ENCODE measurements at regions of chr10 and their contacts with region 1.

Region 1: DNA sequence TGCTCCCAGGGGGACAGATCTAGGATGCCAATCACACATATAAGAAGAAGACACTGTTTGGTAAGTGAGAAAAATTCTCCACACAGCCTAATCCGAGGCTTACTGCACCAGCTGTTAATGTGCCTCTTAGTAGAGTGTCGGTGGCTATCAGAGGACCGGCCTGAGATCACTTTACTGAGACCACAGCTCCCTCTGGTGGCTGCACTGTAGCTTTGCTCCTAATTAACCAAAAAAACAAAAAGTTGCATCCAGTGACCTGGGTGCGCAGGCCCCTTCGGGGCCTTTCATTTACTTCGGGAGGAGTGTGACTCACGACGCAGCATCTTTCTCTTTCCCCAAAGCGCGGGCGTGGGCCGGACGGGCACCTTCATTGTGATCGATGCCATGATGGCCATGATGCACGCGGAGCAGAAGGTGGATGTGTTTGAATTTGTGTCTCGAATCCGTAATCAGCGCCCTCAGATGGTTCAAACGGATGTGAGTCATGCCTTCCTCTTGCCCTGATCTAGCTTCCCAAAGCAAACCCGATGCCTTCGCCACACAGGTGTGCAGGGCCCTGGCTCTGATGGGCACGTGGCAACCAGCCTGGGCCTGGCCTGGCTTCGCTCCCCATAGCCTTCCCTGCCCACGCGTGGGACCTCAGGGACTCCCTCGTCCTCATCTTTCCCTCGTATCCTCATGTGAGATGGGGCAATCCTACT is 56.7 kb downstream of the MKI67 start:
- DNase-seq: peak; percentile 82
- H3K4me3 Mint-ChIP-seq: no peak overlapping the region
- H3K27ac Mint-ChIP-seq: no peak overlapping the region
- H3K4me1 Mint-ChIP-seq: peaks cover 46% of the 10 kb centered on the region
- H3K27me3 Mint-ChIP-seq: no peaks in the 10 kb centered on the region

Region 2: DNA sequence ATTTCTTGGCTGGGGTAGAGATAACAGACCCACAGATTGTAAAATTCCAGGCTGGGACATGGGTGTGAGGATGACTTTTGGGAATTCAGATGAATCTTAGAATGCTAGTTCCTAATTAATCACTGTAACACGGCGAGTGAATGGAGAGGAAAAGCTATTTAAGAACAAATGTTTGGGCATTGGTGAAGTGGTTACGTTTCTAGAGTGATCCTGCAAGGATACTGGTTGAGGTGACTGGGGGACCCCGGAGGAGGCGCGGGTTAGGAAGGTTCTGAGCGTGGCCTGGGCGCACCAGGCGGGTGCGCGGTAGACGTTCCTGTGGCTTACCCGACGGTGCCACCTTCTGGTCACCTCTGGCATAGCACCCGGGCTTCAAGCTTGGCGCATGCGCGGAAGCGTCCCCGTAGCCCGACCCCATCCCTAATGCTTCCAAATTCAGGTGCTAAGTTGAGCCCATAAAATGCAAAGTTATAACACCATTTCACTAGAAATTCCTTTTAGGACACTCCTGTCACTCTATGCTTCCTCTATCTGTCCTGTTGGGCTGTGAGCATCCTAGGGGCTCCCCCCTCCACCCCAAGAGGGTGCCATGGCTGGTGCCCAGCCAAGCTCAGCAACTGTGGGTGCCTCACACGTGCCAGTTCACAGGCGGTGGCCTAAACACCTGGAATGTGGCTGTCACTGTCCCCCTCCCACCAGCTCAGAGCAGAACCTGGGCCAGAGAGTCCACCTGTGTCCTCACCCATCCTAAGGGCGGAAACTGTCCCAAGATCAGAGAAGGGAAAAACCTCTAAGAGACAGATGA is 58.1 kb before region 1 on chr10:
- CTCF ChIA-PET with region 1: interaction called, 11 read pairs
- POLR2A ChIA-PET with region 1: no interaction called
- DNase-seq: peak; percentile 85
- H3K4me3 Mint-ChIP-seq: no peak overlapping the region
- H3K27ac Mint-ChIP-seq: no peak overlapping the region
- H3K4me1 Mint-ChIP-seq: peaks cover 8% of the 10 kb centered on the region
- H3K27me3 Mint-ChIP-seq: no peaks in the 10 kb centered on the region

Region 3: GRCh38 chr10:128035557-128035973 is 33.9 kb before region 1 on chr10:
- CTCF ChIA-PET with region 1: interaction called, 51 read pairs
- POLR2A ChIA-PET with region 1: no interaction called
- DNase-seq: peak; percentile 62
- H3K4me3 Mint-ChIP-seq: no peak overlapping the region
- H3K27ac Mint-ChIP-seq: no peak overlapping the region
- H3K4me1 Mint-ChIP-seq: no peaks in the 10 kb centered on the region
- H3K27me3 Mint-ChIP-seq: peaks cover 2% of the 10 kb centered on the region

Region 4: GRCh38 chr10:128047351-128047750 is 22.1 kb before region 1 on chr10:
- CTCF ChIA-PET with region 1: interaction called, 24 read pairs
- POLR2A ChIA-PET with region 1: no interaction called
- DNase-seq: peak; percentile 91
- H3K4me3 Mint-ChIP-seq: peak overlapping the region; percentile 91
- H3K27ac Mint-ChIP-seq: peak overlapping the region; percentile 97
- H3K4me1 Mint-ChIP-seq: peaks cover 57% of the 10 kb centered on the region
- H3K27me3 Mint-ChIP-seq: no peaks in the 10 kb centered on the region